ENCODE measurements at regions of chr5 and their contacts with region 1.

Region 1: GRCh38 chr5:81851481-81852178 is 100.7 kb upstream of the SSBP2 start:
- DNase-seq: peak; percentile 94
- ATAC-seq: peak; percentile 93
- H3K4me3 ChIP-seq: peak overlapping the region; percentile 31
- H3K27ac ChIP-seq: peak overlapping the region; percentile 94
- H3K4me1 ChIP-seq: peaks cover 19% of the 10 kb centered on the region
- H3K27me3 ChIP-seq: no peaks in the 10 kb centered on the region
- CTCF ChIP-seq: 0 out of 2 replicates have a peak, but pooled peaks have one; percentile 1
- POLR2A ChIP-seq: no peak
- RAD21 ChIP-seq: peak; percentile 60

Region 2: GRCh38 chr5:81301271-81302015 is 550.2 kb before region 1 on chr5 and contains the start of gene ZCCHC9:
- CTCF ChIA-PET with region 1: no interaction called
- POLR2A ChIA-PET with region 1: no interaction called
- dilution Hi-C with region 1: no loop called
- in situ Hi-C with region 1: no loop called
- intact Hi-C with region 1: loop called (anchors 1 kb)
- DNase-seq: peak; percentile 96
- ATAC-seq: peak; percentile 87
- H3K4me3 ChIP-seq: peak within 1 kb of the TSS; percentile 61
- H3K27ac ChIP-seq: peak within 1 kb of the TSS; percentile 91
- H3K4me1 ChIP-seq: peaks cover 4% of the 10 kb centered on the region
- H3K27me3 ChIP-seq: no peaks in the 10 kb centered on the region
- CTCF ChIP-seq: peak; percentile 35
- POLR2A ChIP-seq: peak; percentile 94
- RAD21 ChIP-seq: no peak
- total RNA-seq, gene ZCCHC9: 24.6 and 41.1 TPM in 2 replicates

Region 3: DNA sequence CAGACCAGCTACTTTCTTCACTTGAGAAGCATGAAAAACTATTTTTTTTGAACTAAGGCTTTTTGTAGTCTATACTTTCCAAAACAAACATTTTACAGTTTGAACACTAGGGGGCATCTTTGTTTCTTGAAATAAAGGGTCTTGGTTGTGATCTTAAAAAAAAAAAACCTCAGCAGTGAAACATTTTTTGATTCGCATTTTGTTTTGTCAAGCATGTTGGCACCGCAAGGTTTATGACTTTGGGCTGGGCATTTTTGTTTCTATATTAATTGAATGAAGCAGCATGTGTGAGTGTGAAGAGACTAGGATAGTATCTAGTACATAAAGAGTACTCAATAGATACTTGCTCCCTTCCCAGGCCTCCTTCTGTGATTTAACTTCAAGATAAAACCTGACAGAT is 426.1 kb before region 1 on chr5:
- CTCF ChIA-PET with region 1: no interaction called
- POLR2A ChIA-PET with region 1: no interaction called
- dilution Hi-C with region 1: no loop called
- in situ Hi-C with region 1: loop called (anchors 10 kb)
- intact Hi-C with region 1: loop called (anchors 5 kb)
- DNase-seq: peak; percentile 65
- ATAC-seq: no peak
- H3K4me3 ChIP-seq: no peak overlapping the region
- H3K27ac ChIP-seq: peak overlapping the region; percentile 42; the same call in 1 of the 2 replicates
- H3K4me1 ChIP-seq: peaks cover 21% of the 10 kb centered on the region
- H3K27me3 ChIP-seq: no peaks in the 10 kb centered on the region
- CTCF ChIP-seq: peak; percentile 57
- POLR2A ChIP-seq: no peak
- RAD21 ChIP-seq: peak; percentile 61

Region 4: GRCh38 chr5:81898403-81898802 is 46.8 kb after region 1 on chr5:
- CTCF ChIA-PET with region 1: no interaction called
- POLR2A ChIA-PET with region 1: no interaction called
- dilution Hi-C with region 1: no loop called
- in situ Hi-C with region 1: no loop called
- intact Hi-C with region 1: no loop called
- DNase-seq: no peak
- ATAC-seq: no peak
- H3K4me3 ChIP-seq: no peak overlapping the region
- H3K27ac ChIP-seq: no peak overlapping the region
- H3K4me1 ChIP-seq: no peaks in the 10 kb centered on the region
- H3K27me3 ChIP-seq: no peaks in the 10 kb centered on the region; the same call in 1 of the 2 replicates
- CTCF ChIP-seq: no peak
- POLR2A ChIP-seq: no peak
- RAD21 ChIP-seq: no peak

Region 5: GRCh38 chr5:81971712-81972495 is 120.3 kb after region 1 on chr5 and contains the start of gene ATG10:
- CTCF ChIA-PET with region 1: no interaction called
- POLR2A ChIA-PET with region 1: no interaction called
- dilution Hi-C with region 1: no loop called
- in situ Hi-C with region 1: no loop called
- intact Hi-C with region 1: loop called (anchors 1 kb)
- DNase-seq: peak; percentile 90
- ATAC-seq: peak; percentile 99
- H3K4me3 ChIP-seq: peak within 1 kb of the TSS; percentile 99
- H3K27ac ChIP-seq: peak within 1 kb of the TSS; percentile 98
- H3K4me1 ChIP-seq: no peaks in the 10 kb centered on the region
- H3K27me3 ChIP-seq: no peaks in the 10 kb centered on the region
- CTCF ChIP-seq: no peak
- POLR2A ChIP-seq: peak; percentile 92
- RAD21 ChIP-seq: no peak
- total RNA-seq, gene ATG10: 8.1 and 12.2 TPM in 2 replicates

Region 6: GRCh38 chr5:82225525-82226172 is 374.0 kb after region 1 on chr5:
- CTCF ChIA-PET with region 1: interaction called, 4 read pairs
- POLR2A ChIA-PET with region 1: no interaction called
- dilution Hi-C with region 1: no loop called
- in situ Hi-C with region 1: no loop called
- intact Hi-C with region 1: loop called (anchors 1 kb)
- DNase-seq: peak; percentile 85
- ATAC-seq: peak; percentile 96
- H3K4me3 ChIP-seq: no peak overlapping the region
- H3K27ac ChIP-seq: no peak overlapping the region; the same call in 1 of the 2 replicates
- H3K4me1 ChIP-seq: peaks cover 2% of the 10 kb centered on the region; the same call in 1 of the 2 replicates
- H3K27me3 ChIP-seq: no peaks in the 10 kb centered on the region
- CTCF ChIP-seq: peak; percentile 93
- POLR2A ChIP-seq: no peak
- RAD21 ChIP-seq: peak; percentile 89

Measured in IMR-90 (cell line).